H1 (cell line): ENCODE measurements at regions of chr12 and their contacts with region 1.

Region 1: DNA sequence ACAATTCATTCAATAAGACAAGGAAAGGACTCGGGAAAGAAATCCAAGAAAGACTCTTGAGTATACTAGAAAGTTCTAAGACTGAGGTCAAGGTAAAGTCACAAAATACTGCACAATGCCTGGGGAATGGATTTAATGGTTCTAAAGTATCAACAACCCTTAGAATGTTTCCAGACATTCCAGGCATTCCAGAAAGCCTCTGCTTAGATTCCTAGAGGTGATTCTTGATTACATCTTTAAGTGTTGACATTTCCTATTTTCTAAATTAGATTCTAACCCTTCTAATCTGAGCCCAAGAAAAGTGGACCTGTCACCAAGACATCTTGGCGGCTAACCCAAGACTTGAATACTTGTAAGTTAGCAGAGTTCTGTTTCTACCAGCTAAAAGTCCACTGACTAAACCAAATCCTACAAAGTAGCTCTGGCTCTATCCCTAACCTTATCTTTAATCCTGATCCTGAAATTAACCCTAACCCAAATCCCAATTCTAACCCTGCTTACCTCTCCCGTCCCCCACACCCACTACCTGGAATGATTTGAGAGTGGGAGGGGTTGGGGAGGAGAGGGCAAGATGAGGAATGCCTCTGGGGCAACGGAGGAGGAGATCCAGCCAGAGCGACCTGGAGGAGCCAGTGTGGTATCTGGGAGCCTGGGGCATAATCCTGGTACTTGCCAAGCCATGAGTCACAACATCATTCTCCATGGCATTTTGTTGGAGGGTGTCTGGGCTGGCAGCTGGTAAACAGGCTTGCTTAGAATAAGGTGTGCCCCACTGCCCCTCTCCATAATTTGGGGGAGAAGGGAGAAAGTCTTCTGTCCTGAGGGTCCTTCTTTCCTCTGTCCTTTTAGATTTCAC is 93.4 kb upstream of the HOXC13 start:
- DNase-seq: no peak
- H3K4me3 ChIP-seq: no peak overlapping the region
- H3K27ac ChIP-seq: no peak overlapping the region
- H3K4me1 ChIP-seq: peaks cover 0 to 3% (median 0%) of the 10 kb centered on the region in 4 experiments; a peak in 1 of 7 replicates
- H3K27me3 ChIP-seq: peaks cover 0 to 3% (median 0%) of the 10 kb centered on the region in 4 experiments; a peak in 1 of 7 replicates
- CTCF ChIP-seq: no peak
- EP300 ChIP-seq: no peak
- POLR2A ChIP-seq: no peak
- RAD21 ChIP-seq: no peak

Region 2: GRCh38 chr12:53830621-53831020 is 14.6 kb before region 1 on chr12:
- CTCF ChIA-PET with region 1: interaction called, 19 read pairs
- POLR2A ChIA-PET with region 1: no interaction called
- DNase-seq: no peak
- H3K4me3 ChIP-seq: no peak overlapping the region
- H3K27ac ChIP-seq: no peak overlapping the region
- H3K4me1 ChIP-seq: no peaks in the 10 kb centered on the region; a peak in 1 of 7 replicates
- H3K27me3 ChIP-seq: no peaks in the 10 kb centered on the region
- CTCF ChIP-seq: no peak
- EP300 ChIP-seq: no peak
- POLR2A ChIP-seq: no peak
- RAD21 ChIP-seq: no peak

Region 3: DNA sequence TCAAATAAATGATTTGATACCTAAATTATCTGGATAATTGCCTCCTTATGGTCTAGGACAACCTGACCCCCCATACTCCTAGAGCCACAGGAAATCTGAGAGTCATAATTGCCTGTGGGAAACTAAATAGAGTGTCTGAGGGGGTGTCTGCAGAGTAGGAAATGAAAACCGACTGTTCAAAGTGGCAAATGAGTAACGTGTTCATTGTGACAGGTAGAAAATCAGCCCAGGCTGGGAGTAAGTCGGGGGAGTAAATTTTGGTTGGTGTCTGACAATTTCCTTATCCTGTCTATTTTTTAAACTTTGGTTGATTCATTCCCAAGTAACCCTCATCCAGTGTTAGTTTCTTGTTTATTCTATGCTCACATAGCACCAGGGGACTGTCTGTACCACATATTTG is 41.8 kb after region 1 on chr12:
- CTCF ChIA-PET with region 1: no interaction called
- POLR2A ChIA-PET with region 1: no interaction called
- DNase-seq: no peak
- H3K4me3 ChIP-seq: no peak overlapping the region
- H3K27ac ChIP-seq: no peak overlapping the region
- H3K4me1 ChIP-seq: no peaks in the 10 kb centered on the region
- H3K27me3 ChIP-seq: peaks cover 0 to 1% (median 0%) of the 10 kb centered on the region in 4 experiments; a peak in 3 of 7 replicates
- CTCF ChIP-seq: no peak
- EP300 ChIP-seq: no peak
- POLR2A ChIP-seq: no peak
- RAD21 ChIP-seq: no peak